ENCODE measurements at regions of chr12 and their contacts with region 1.

Region 1: GRCh38 chr12:103632554-103633216 is 45.6 kb downstream of the STAB2 start:
- DNase-seq: peak; percentile 55
- H3K4me3 Mint-ChIP-seq: no peak overlapping the region
- H3K27ac Mint-ChIP-seq: no peak overlapping the region
- H3K4me1 Mint-ChIP-seq: no peaks in the 10 kb centered on the region
- H3K27me3 Mint-ChIP-seq: peaks cover 17% of the 10 kb centered on the region

Region 2: DNA sequence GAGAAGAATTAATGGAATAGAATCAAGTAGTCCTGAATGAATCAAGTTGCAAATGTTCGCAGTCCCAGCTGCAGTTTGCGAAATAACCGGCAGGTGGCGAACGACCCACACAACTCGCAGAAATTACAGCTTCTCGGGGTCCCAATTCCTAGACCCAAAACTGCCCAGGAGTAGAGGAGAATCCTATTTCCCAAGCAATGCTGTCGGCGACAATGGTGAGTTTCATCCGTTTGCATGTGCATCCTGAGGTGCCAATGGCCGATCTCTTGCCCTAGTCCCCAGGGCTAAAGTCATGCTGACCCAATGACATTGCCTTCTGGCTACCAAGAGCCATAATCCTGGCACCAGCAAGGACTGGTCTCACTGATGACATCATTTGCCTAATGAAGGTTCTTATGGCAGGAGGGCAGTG is 683.7 kb before region 1 on chr12:
- intact Hi-C with region 1: loop called (anchors 1 kb)
- DNase-seq: no peak
- H3K4me3 Mint-ChIP-seq: no peak overlapping the region
- H3K27ac Mint-ChIP-seq: no peak overlapping the region
- H3K4me1 Mint-ChIP-seq: peaks cover 21% of the 10 kb centered on the region
- H3K27me3 Mint-ChIP-seq: peaks cover 45% of the 10 kb centered on the region

Region 3: GRCh38 chr12:103547929-103548328 is 84.8 kb before region 1 on chr12:
- intact Hi-C with region 1: no loop called
- DNase-seq: no peak
- H3K4me3 Mint-ChIP-seq: no peak overlapping the region
- H3K27ac Mint-ChIP-seq: no peak overlapping the region
- H3K4me1 Mint-ChIP-seq: peaks cover 13% of the 10 kb centered on the region
- H3K27me3 Mint-ChIP-seq: peaks cover 17% of the 10 kb centered on the region

Region 4: DNA sequence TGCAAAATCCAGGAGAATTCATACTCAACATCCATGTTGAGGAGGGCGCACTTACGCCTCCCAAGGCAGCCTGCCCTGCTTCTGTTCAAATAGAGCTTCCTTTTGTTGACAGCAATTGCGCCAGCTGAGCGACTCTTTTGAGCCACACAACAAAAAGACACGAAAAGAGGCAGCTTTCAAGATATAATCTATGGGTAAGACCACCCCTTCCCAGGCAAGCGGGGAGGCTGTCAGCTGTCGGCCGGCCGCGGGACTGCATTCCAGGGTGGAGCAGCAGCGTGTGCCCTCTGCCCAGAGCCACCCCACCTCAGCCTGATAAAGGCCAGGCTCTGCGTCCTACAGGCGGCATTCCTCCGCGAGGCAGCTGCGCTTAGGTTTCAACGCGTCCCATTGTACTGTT is 61.4 kb before region 1 on chr12:
- intact Hi-C with region 1: loop called (anchors 1 kb)
- DNase-seq: no peak
- H3K4me3 Mint-ChIP-seq: no peak overlapping the region
- H3K27ac Mint-ChIP-seq: no peak overlapping the region
- H3K4me1 Mint-ChIP-seq: peaks cover 9% of the 10 kb centered on the region
- H3K27me3 Mint-ChIP-seq: peaks cover 25% of the 10 kb centered on the region

Region 5: GRCh38 chr12:103647267-103647666 is 14.6 kb after region 1 on chr12:
- intact Hi-C with region 1: no loop called
- DNase-seq: no peak
- H3K4me3 Mint-ChIP-seq: no peak overlapping the region
- H3K27ac Mint-ChIP-seq: no peak overlapping the region
- H3K4me1 Mint-ChIP-seq: no peaks in the 10 kb centered on the region
- H3K27me3 Mint-ChIP-seq: peaks cover 5% of the 10 kb centered on the region